Mammary epithelial cell (primary cell): ENCODE measurements at regions of chr19 and their contacts with region 1.

Region 1: GRCh38 chr19:44643605-44644401 is at the start of gene PVR:
- DNase-seq: peak; percentile 79
- H3K4me3 ChIP-seq: peak within 1 kb of the TSS; percentile 73 to 94 (median 81)
- H3K27ac ChIP-seq: peak within 1 kb of the TSS; percentile 75
- H3K4me1 ChIP-seq: peaks cover 7% of the 10 kb centered on the region
- H3K27me3 ChIP-seq: no peaks in the 10 kb centered on the region
- CTCF ChIP-seq: no peak
- total RNA-seq, gene PVR: 85.9 to 120 TPM

Region 2: DNA sequence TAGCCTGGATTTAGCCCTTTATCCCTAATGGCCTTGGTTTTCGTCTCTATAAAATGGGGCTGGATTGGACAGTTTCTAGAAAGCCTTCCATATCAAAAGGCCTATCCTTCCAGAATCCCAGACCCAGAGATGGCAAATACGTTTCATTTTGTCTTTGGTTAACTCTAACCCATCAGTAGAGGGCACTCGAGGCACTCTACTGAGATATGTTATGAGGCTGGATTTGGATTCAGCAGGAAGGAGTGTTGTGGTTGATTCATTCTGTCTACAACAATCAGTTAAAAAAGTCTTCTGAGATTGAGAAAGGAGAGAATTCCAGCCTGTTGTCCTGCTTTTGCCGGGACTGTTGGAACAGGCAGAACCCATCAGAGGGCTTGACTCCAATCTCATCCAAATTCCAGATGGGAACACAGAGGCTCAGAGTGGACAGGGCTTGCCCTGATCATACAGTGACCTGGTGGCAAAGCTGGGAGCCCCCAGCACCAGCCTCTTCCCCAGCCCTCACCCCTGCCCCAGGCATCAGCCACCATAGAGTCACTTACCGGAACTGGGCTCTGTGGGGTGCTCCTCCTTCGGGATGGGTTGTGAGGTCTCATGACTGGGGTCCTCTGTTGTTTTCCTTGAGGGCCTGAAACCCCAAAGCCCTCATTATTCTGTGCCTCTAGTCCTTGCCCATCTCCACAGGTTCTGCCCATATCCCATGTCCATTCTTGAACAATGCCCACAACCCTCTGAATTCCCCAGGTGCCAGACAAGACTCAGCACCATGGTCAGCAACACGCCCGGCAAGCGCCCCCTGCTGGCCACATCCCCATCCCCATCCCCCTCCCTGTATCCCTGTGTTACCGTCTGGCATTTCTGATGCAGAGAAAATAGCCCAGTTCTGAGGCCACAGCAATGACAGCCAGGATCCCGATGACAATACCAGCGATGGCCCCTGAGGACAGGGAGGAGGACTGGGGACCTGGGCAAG is 131.2 kb before region 1 on chr19:
- CTCF ChIA-PET with region 1: no interaction called
- dilution Hi-C with region 1: no loop called
- in situ Hi-C with region 1: no loop called
- intact Hi-C with region 1: loop called (anchors 10 kb)
- DNase-seq: peak; percentile 61
- H3K4me3 ChIP-seq: no peak overlapping the region
- H3K27ac ChIP-seq: no peak overlapping the region
- H3K4me1 ChIP-seq: no peaks in the 10 kb centered on the region
- H3K27me3 ChIP-seq: peaks cover 5% of the 10 kb centered on the region
- CTCF ChIP-seq: peak; percentile 69 to 89

Region 3: DNA sequence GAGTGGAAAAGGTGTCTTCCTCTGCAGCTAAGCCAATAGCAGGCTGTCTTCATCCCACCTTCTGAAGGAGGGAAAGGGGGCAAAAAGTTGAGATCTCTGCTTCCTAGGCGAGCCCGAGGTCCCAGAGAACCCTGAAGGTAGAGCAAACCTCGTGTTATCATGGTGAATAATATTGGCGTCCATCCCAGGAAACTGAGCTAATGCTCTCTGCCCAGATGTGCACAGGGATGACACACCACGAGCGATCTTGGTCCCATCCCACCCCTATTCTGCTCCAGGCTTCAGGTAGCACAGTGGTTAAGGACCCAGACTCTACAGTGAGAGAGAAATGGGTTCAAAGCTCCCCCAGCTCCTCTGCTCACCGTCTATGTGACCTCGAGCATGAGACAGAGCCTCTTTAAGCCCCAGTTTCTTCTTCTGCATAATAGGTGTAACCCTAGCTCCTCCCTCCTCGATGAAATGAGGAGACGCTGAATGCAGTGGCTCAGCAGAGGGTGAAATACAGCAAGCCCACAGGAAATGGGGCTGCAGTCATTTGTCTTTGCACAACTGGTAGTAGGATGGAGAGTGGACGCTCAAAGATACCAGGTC is 104.5 kb before region 1 on chr19:
- CTCF ChIA-PET with region 1: no interaction called
- dilution Hi-C with region 1: no loop called
- in situ Hi-C with region 1: no loop called
- intact Hi-C with region 1: no loop called
- DNase-seq: peak; percentile 52
- H3K4me3 ChIP-seq: no peak overlapping the region
- H3K27ac ChIP-seq: no peak overlapping the region
- H3K4me1 ChIP-seq: no peaks in the 10 kb centered on the region
- H3K27me3 ChIP-seq: no peaks in the 10 kb centered on the region
- CTCF ChIP-seq: no peak

Region 4: GRCh38 chr19:44607049-44607448 is 36.8 kb before region 1 on chr19:
- CTCF ChIA-PET with region 1: no interaction called
- dilution Hi-C with region 1: no loop called
- in situ Hi-C with region 1: no loop called
- intact Hi-C with region 1: loop called (anchors 1 kb)
- DNase-seq: no peak
- H3K4me3 ChIP-seq: no peak overlapping the region
- H3K27ac ChIP-seq: no peak overlapping the region
- H3K4me1 ChIP-seq: no peaks in the 10 kb centered on the region
- H3K27me3 ChIP-seq: no peaks in the 10 kb centered on the region
- CTCF ChIP-seq: no peak

Region 5: GRCh38 chr19:44626048-44626624 is 17.7 kb before region 1 on chr19:
- CTCF ChIA-PET with region 1: interaction called, 16 read pairs
- dilution Hi-C with region 1: no loop called
- in situ Hi-C with region 1: no loop called
- intact Hi-C with region 1: loop called (anchors 2 kb)
- DNase-seq: peak; percentile 90
- H3K4me3 ChIP-seq: no peak overlapping the region
- H3K27ac ChIP-seq: no peak overlapping the region
- H3K4me1 ChIP-seq: peaks cover 24% of the 10 kb centered on the region
- H3K27me3 ChIP-seq: peaks cover 3% of the 10 kb centered on the region
- CTCF ChIP-seq: no peak

Region 6: DNA sequence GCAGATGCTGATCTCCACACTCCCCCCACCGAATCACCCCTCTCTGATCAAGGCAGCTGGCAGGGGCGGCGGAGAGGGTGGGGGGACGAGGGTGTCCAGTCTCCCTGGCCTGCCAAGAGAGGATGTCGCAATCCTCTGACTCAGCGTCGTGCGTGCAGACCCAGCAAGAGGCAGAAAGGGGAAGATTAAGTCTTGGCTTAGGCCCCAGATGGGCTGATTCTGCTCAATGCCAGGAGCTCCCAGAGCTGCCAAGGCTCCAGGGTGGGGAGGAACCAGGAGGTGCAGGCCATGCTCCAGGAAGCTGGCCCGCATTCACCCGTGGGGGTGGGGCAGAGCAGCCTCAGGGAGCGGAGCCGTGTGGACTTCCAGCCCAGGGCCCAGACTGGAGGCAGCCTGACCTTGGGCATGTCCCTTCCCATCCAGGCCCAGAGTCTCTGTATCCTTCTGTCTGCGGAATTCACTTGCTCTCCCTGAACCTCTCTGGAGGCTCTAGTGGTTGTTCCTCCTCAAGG is 98.1 kb after region 1 on chr19:
- CTCF ChIA-PET with region 1: no interaction called
- dilution Hi-C with region 1: loop called (anchors 5 kb)
- in situ Hi-C with region 1: no loop called
- intact Hi-C with region 1: no loop called
- DNase-seq: peak; percentile 99
- H3K4me3 ChIP-seq: no peak overlapping the region
- H3K27ac ChIP-seq: peak overlapping the region; percentile 78
- H3K4me1 ChIP-seq: peaks cover 35% of the 10 kb centered on the region
- H3K27me3 ChIP-seq: no peaks in the 10 kb centered on the region
- CTCF ChIP-seq: no peak